BJ (cell line): ENCODE measurements at regions of chr10 and their contacts with region 1.

Region 1: DNA sequence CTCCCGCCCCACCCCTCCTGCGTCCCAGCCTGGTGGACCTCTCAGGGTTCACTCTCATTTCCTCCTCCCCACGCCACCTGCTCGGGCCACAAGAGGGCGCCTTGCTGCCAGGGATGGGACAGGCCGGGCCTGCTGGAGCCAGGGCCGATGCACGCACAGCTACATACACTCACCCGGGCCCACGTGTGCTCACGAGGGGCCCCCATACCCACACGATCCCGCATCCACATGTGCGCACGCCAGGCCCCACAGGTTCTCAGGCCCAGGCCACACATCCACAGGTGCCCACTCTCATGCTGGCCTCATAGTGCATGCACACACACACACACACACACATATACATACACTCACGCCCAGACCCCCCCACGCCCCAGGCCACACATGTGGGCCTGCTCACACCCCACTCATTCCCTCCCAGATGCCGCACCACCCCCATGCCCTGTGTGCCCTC is 68.6 kb downstream of the LHPP start:
- DNase-seq: peak; percentile 7
- H3K4me3 ChIP-seq: no peak overlapping the region
- H3K27me3 ChIP-seq: no peaks in the 10 kb centered on the region
- CTCF ChIP-seq: peak; percentile 98

Region 2: DNA sequence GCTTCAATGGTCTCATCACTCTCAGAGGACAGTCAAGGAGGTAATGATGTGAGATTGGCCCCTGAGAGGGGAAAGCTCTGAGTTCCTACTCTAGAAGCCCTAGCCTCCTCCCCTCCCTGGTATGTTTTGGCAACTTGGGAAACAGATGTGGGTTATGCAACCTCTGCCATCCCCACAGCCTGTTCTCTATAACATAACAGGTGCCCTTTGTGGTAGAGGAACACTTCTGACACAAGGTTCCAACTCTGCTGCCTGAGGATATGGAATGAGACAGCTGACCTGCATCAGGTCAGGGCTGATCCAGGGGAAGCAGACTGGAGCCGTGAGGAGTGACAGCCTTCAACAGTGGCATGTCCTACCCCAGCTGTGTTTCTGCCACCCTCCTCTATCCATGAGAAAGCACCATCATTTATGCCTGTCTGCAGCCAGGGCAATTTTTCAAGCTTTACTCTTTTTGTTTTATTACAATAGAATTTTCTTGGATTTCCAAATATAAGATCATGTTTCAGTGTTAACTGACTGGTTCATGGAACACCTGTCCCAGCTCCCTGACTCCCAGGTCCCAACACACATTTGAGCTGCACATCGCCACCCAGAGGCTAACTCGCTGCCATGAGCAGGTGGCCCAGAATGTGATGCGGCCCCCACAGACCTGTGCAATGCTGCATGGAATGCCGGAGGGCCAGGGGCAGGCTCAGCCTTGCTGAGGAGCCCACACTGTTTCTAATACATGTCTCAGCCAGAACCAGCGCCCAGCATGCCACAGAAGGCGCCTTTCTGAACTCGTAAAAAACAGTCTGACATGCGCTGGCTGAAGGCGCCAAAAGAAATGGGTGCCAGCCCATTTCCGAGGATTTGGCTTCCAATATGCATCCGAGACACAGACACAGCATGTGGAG is 312.1 kb before region 1 on chr10:
- CTCF ChIA-PET with region 1: no interaction called
- POLR2A ChIA-PET with region 1: no interaction called
- DNase-seq: no peak
- H3K4me3 ChIP-seq: no peak overlapping the region
- H3K27me3 ChIP-seq: no peaks in the 10 kb centered on the region
- CTCF ChIP-seq: no peak

Region 3: DNA sequence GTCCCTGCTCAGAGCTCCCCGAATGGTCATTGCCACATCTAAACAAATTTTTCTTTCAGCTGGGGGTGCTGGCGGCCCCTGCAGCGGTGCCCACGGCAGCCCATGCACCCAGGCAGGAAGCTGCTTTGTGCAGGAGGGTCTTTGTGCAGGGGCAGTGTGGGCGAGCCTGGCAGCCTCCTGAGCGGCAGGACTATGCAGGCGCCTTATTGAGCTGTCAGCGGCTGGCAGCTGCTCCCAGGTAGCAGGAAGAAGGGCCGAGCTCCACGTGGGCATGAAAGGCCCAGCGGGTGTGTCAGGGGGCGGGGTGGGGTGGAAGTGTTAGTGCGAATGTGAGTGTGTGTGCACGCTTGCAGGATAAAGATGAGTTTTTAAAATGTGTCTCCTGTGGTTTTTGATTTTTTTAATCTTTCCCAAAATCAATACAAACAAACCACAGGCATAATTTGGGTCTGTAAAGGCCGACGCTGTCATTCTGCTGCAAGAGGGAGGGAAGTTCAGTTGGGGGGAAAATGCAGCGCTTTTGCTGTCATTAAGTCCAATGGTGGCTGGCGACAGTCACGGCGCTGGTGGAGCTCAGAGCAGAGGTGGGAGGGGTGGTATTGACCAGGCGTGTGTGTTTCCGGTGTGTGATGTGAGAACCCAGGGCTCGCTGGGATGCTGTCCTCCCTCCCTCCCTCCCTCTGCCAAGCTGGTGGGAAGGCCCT is 15.3 kb after region 1 on chr10:
- CTCF ChIA-PET with region 1: interaction called, 27 read pairs
- POLR2A ChIA-PET with region 1: no interaction called
- DNase-seq: no peak
- H3K4me3 ChIP-seq: no peak overlapping the region
- H3K27me3 ChIP-seq: no peaks in the 10 kb centered on the region
- CTCF ChIP-seq: no peak

Region 4: DNA sequence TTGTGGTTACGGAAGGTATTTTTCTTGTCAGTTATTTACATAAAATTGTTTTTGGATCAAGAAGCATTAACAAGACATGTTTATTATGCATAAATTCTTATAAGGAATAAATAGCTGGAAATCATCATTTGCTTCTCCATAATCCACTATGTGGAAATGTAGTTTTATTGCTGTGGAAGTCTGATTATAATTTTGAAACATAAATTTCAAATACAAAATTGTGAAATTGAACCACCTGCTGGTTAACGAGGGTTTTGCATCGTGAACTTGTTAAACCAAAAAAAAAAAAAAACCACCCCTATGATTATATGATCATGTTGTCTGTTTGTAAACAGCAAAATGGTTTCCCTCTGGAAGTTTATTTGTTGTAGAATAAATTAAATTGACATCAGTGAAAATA is 297.2 kb after region 1 on chr10:
- CTCF ChIA-PET with region 1: interaction called, 6 read pairs
- POLR2A ChIA-PET with region 1: interaction called, 24 read pairs
- DNase-seq: no peak
- H3K4me3 ChIP-seq: no peak overlapping the region
- H3K27me3 ChIP-seq: no peaks in the 10 kb centered on the region
- CTCF ChIP-seq: peak; percentile 55